PC-9 (cell line): ENCODE measurements at regions of chr9 and their contacts with region 1.

Region 1: DNA sequence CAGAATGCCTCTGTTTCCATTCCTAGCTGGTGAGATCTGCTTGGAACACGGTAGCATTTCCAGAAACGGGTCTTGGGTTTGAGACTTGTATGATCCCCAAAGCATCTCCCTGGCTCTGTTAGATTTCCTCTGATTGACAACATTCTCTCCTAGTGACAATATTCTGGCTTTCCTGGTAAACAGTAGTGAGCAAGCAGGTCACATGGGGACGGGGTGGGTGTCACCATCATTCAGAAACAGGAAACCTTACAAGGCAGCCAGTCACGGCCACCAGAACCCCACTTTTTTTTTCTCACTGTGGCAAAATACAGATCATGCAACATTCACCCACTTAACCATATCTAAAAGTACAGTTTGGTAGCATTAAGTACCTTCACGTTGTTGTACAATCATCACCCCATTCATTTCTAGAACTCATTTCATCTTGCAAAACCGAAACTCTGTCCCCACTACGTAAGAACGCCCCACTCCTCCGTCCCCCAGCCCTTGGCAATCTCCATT is 90.1 kb upstream of the LMX1B start:
- DNase-seq: no peak
- H3K4me3 ChIP-seq: no peak overlapping the region
- H3K27ac ChIP-seq: no peak overlapping the region
- H3K4me1 ChIP-seq: no peaks in the 10 kb centered on the region
- H3K27me3 ChIP-seq: peaks cover 86% of the 10 kb centered on the region
- CTCF ChIP-seq: no peak

Region 2: GRCh38 chr9:125961072-125961471 is 562.6 kb before region 1 on chr9:
- CTCF ChIA-PET with region 1: no interaction called
- POLR2A ChIA-PET with region 1: no interaction called
- intact Hi-C with region 1: no loop called
- DNase-seq: no peak
- H3K4me3 ChIP-seq: no peak overlapping the region
- H3K27ac ChIP-seq: no peak overlapping the region
- H3K4me1 ChIP-seq: no peaks in the 10 kb centered on the region
- H3K27me3 ChIP-seq: no peaks in the 10 kb centered on the region
- CTCF ChIP-seq: no peak

Region 3: DNA sequence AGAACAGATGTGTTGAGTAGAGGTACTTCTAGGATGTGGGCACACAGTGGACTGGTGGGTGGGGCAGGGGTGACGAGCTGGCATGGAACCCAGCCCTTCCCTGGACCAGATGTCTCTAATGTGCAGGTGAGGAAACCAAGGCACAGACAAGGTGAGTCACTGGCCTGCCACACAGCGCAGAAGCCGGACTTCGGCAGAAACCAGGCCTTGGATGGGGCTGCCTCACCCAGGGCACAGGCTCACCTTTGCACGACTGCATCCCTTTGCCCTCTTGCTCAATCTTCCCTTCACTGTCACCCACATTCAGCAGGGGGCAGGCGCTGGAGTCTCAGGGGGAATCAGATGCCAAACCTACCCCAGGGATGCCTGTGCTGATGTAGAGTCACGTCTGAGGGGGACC is 24.7 kb after region 1 on chr9:
- CTCF ChIA-PET with region 1: interaction called, 10 read pairs
- POLR2A ChIA-PET with region 1: no interaction called
- intact Hi-C with region 1: no loop called
- DNase-seq: no peak
- H3K4me3 ChIP-seq: no peak overlapping the region
- H3K27ac ChIP-seq: no peak overlapping the region
- H3K4me1 ChIP-seq: no peaks in the 10 kb centered on the region
- H3K27me3 ChIP-seq: peaks cover 6% of the 10 kb centered on the region; the same call in 1 of the 2 replicates
- CTCF ChIP-seq: no peak

Region 4: DNA sequence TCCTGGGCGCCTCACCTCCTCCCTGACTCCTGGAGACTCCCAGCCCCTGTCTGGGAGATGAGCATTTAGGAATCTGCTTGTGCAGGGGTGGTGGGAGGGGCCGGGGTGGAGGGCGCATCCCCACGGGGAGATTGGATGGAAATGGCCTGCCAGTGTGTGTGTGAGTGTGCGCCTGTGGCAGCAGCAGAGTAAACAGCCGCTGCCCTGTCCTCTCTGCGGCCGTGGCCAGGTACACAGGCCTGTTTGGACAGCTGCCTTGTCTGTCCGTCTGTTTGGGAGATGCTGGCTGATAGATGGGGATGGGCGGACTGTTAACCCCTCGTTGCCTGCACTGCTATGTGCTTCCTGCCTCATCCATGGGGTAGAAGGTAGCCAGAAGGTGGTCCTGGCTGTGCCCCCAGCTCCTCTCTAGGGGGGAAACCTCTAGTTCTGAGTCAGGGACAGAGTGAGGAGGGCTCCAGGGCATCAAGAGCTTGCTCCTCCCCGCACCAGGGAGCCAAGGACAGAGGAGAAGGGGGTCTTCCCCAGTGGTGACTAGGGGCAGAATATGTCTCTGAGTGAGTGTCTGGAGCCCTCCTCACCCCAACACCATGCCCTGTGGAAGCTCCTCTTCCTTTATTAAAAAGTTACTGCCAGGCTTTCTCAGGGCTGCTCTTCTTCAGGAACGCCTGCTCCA is 150.2 kb after region 1 on chr9:
- CTCF ChIA-PET with region 1: interaction called, 13 read pairs
- POLR2A ChIA-PET with region 1: no interaction called
- intact Hi-C with region 1: no loop called
- DNase-seq: peak in 1 of 2 experiments; percentile 38
- H3K4me3 ChIP-seq: no peak overlapping the region
- H3K27ac ChIP-seq: no peak overlapping the region
- H3K4me1 ChIP-seq: no peaks in the 10 kb centered on the region
- H3K27me3 ChIP-seq: peaks cover 54% of the 10 kb centered on the region
- CTCF ChIP-seq: no peak